ENCODE measurements at regions of chr16 and their contacts with region 1.

Region 1: GRCh38 chr16:78142788-78143187 is 43.3 kb downstream of the WWOX start:
- DNase-seq: no peak
- H3K4me3 ChIP-seq: no peak overlapping the region
- H3K27ac ChIP-seq: no peak overlapping the region
- H3K4me1 ChIP-seq: peaks cover 11% of the 10 kb centered on the region
- CTCF ChIP-seq: no peak

Region 2: GRCh38 chr16:78154729-78155461 is 12.1 kb after region 1 on chr16:
- CTCF ChIA-PET with region 1: no interaction called
- POLR2A ChIA-PET with region 1: interaction called, 12 read pairs
- intact Hi-C with region 1: no loop called
- DNase-seq: no peak
- H3K4me3 ChIP-seq: no peak overlapping the region
- H3K27ac ChIP-seq: no peak overlapping the region
- H3K4me1 ChIP-seq: no peaks in the 10 kb centered on the region
- CTCF ChIP-seq: no peak